Activated B cell treated with CpG ODN at 0.5 μM for 24 hours (primary cell): ENCODE measurements at regions of chr16 and their contacts with region 1.

Region 1: GRCh38 chr16:2429034-2429770 is at the start of gene CCNF:
- DNase-seq: peak; percentile 91
- ATAC-seq: peak; percentile 97
- H3K4me3 Mint-ChIP-seq: peak within 1 kb of the TSS; percentile 85
- H3K27ac Mint-ChIP-seq: peak within 1 kb of the TSS; percentile 56
- H3K4me1 Mint-ChIP-seq: peaks cover 16% of the 10 kb centered on the region
- H3K27me3 Mint-ChIP-seq: no peaks in the 10 kb centered on the region
- CTCF ChIP-seq: no peak
- total RNA-seq, gene CCNF: 5.3 and 5.5 TPM in 2 replicates

Region 2: GRCh38 chr16:2267913-2268666 is 161.1 kb before region 1 on chr16 and contains the start of gene RNPS1:
- CTCF ChIA-PET with region 1: no interaction called
- POLR2A ChIA-PET with region 1: no interaction called
- intact Hi-C with region 1: loop called (anchors 2 kb)
- DNase-seq: peak; percentile 98
- ATAC-seq: peak; percentile 91
- H3K4me3 Mint-ChIP-seq: peak within 1 kb of the TSS; percentile 93
- H3K27ac Mint-ChIP-seq: peak within 1 kb of the TSS; percentile 98
- H3K4me1 Mint-ChIP-seq: peaks cover 43% of the 10 kb centered on the region
- H3K27me3 Mint-ChIP-seq: no peaks in the 10 kb centered on the region
- CTCF ChIP-seq: no peak
- total RNA-seq, gene RNPS1: 228 and 232 TPM in 2 replicates

Region 3: DNA sequence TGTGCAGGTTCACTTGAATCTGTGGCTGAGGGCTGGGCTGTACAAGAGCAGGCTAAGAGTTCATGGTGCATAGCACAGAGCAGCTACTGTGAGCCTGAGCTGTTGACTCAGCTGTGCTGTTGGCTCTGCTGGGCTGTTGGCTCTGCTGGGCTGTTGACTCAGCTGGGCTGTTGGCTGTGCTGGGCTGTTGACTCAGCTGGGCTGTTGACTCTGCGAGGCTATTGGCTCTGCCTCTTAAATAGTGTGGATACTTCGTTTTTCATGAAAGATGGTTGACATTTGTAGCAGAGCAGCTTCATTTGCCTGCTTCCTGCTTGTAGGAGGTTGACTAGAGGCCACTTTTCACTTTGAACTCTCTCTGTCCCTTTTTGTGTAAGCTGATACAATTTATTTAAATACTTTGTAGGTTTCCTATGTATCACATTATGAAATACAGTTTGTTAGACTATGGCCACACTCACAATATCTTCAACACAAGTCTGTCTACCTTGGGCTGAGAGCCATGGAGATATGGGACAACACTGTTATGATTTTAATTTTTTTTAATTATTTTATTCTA is 40.2 kb before region 1 on chr16:
- CTCF ChIA-PET with region 1: no interaction called
- POLR2A ChIA-PET with region 1: no interaction called
- intact Hi-C with region 1: no loop called
- DNase-seq: no peak
- ATAC-seq: no peak
- H3K4me3 Mint-ChIP-seq: no peak overlapping the region
- H3K27ac Mint-ChIP-seq: no peak overlapping the region
- H3K4me1 Mint-ChIP-seq: no peaks in the 10 kb centered on the region
- H3K27me3 Mint-ChIP-seq: peaks cover 17% of the 10 kb centered on the region
- CTCF ChIP-seq: no peak

Region 4: DNA sequence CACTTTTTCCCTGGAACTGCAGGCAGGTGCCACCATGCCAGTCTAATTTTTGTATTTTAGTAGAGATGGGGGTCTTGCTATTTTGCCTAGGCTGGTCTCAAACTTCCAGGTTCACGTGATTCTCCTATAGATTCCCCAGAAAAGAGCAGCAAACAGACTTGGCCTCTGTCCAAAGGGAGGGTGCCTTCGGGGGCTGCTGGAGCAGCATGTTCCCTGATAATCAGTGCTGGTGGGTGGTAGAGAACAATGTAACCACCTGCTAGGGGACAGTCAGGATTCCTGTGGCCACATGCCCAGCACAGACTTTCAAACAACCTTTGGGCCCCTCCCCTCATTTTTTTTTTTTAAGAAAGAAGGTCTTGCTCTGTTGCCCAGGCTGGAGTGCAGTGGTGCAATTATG is 14.1 kb before region 1 on chr16:
- CTCF ChIA-PET with region 1: no interaction called
- POLR2A ChIA-PET with region 1: no interaction called
- intact Hi-C with region 1: no loop called
- DNase-seq: no peak
- ATAC-seq: no peak
- H3K4me3 Mint-ChIP-seq: no peak overlapping the region
- H3K27ac Mint-ChIP-seq: no peak overlapping the region
- H3K4me1 Mint-ChIP-seq: no peaks in the 10 kb centered on the region
- H3K27me3 Mint-ChIP-seq: peaks cover 14% of the 10 kb centered on the region
- CTCF ChIP-seq: no peak

Region 5: GRCh38 chr16:2459647-2460390 is 30.6 kb after region 1 on chr16 and contains the start of gene TEDC2:
- CTCF ChIA-PET with region 1: no interaction called
- POLR2A ChIA-PET with region 1: interaction called, 3 read pairs
- intact Hi-C with region 1: loop called (anchors 2 kb)
- DNase-seq: peak; percentile 91
- ATAC-seq: peak; percentile 100
- H3K4me3 Mint-ChIP-seq: peak within 1 kb of the TSS; percentile 86
- H3K27ac Mint-ChIP-seq: peak within 1 kb of the TSS; percentile 73
- H3K4me1 Mint-ChIP-seq: peaks cover 9% of the 10 kb centered on the region
- H3K27me3 Mint-ChIP-seq: no peaks in the 10 kb centered on the region
- CTCF ChIP-seq: no peak
- total RNA-seq, gene TEDC2: 3.4 and 4.4 TPM in 2 replicates

Region 6: DNA sequence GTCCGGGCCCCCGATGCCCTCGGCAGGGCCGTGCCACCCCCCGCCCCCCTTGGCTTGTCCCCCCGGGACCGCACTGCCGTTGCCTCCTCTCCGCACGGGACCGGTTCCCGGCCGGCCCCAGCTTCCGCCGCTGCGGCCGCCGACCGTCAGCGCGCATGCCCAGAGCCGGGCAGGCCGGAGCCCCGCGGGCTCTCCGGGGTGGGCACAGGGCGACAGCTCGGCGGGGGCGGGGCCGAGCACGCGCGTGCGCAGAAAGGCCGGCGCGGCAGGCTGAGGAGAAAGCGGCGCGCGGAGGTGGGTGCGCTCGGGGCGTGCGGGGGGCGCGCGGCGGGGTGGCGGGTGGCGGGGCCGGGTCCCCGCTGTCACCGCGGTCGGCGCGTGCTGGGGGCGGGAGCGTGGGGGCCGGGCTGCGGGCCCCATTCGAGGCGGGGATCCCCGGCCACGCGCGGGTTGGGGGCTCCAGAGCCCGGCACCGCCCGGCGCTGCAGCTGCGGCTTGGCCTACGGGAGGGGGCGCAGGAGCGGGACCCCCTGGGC is 45.7 kb after region 1 on chr16 and contains the start of gene TBC1D24:
- CTCF ChIA-PET with region 1: interaction called, 3 read pairs
- POLR2A ChIA-PET with region 1: interaction called, 5 read pairs
- intact Hi-C with region 1: loop called (anchors 2 kb)
- DNase-seq: peak; percentile 89
- ATAC-seq: peak; percentile 79
- H3K4me3 Mint-ChIP-seq: peak within 1 kb of the TSS; percentile 83
- H3K27ac Mint-ChIP-seq: no peak within 1 kb of the TSS
- H3K4me1 Mint-ChIP-seq: peaks cover 25% of the 10 kb centered on the region
- H3K27me3 Mint-ChIP-seq: peaks cover 10% of the 10 kb centered on the region
- CTCF ChIP-seq: no peak
- total RNA-seq, gene TBC1D24: 9.1 and 12.6 TPM in 2 replicates